Transverse colon (tissue), 4 donors: ENCODE measurements at regions of chr16 and their contacts with region 1.

Region 1: GRCh38 chr16:82681592-82681991 is 54.8 kb downstream of the CDH13 start:
- DNase-seq: no peak
- H3K4me3 ChIP-seq: no peak overlapping the region
- H3K27ac ChIP-seq: no peak overlapping the region
- H3K4me1 ChIP-seq: no peaks in the 10 kb centered on the region
- H3K27me3 ChIP-seq: no peaks in the 10 kb centered on the region
- CTCF ChIP-seq: no peak
- EP300 ChIP-seq: no peak
- POLR2A ChIP-seq: no peak

Region 2: GRCh38 chr16:82544378-82545160 is 137.0 kb before region 1 on chr16:
- in situ Hi-C with region 1: no loop called
- intact Hi-C with region 1: no loop called
- DNase-seq: no peak
- H3K4me3 ChIP-seq: no peak overlapping the region
- H3K27ac ChIP-seq: no peak overlapping the region
- H3K4me1 ChIP-seq: no peaks in the 10 kb centered on the region
- H3K27me3 ChIP-seq: no peaks in the 10 kb centered on the region
- CTCF ChIP-seq: no peak
- EP300 ChIP-seq: no peak
- POLR2A ChIP-seq: no peak

Region 3: DNA sequence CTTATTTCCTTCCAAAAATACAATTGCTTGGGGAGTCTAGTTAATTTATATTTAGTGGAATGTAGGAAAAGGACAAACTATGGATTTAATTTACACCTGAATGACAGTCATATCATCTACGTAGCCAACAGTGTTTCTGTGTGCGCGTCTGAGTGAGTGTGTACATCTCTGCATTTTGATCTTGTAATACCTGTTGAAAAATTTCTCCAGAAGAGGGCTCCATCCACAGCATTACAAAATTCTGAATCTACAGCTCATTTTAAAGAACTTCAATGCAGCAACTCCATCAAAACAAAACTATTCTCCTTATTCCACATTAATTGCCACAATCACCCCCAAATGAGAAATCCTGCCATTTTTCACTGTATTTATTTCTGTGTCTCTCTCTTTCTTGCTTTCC is 50.9 kb before region 1 on chr16:
- in situ Hi-C with region 1: no loop called
- intact Hi-C with region 1: no loop called
- DNase-seq: no peak
- H3K4me3 ChIP-seq: no peak overlapping the region
- H3K27ac ChIP-seq: no peak overlapping the region
- H3K4me1 ChIP-seq: peaks cover 18 to 38% (median 21%) of the 10 kb centered on the region in 4 donors
- H3K27me3 ChIP-seq: peaks cover 48% of the 10 kb centered on the region
- CTCF ChIP-seq: peak; percentile 25 to 36 (median 28)
- EP300 ChIP-seq: no peak
- POLR2A ChIP-seq: no peak

Region 4: DNA sequence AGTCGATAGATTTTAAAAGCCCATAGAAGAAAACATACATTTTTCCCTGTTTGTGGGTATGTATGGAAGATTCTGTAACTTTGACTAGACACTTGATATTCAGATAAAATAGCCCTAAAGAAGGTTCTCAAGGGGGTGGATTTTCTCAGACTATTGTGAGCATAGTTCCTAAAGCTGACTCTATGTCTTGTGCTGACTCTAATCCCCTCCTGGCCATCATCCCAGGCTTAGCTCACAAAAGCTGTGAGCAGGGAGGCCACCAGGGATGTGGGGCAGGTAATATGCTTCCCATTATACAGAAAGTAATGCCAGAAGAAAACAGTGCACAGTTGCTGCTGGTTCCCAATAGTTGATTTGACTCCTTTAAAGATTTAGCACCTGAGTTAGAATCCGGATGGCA is 22.8 kb before region 1 on chr16:
- in situ Hi-C with region 1: no loop called
- intact Hi-C with region 1: loop called (anchors 1 kb)
- DNase-seq: no peak
- H3K4me3 ChIP-seq: no peak overlapping the region
- H3K27ac ChIP-seq: no peak overlapping the region
- H3K4me1 ChIP-seq: peaks cover 0 to 3% (median under 1%) of the 10 kb centered on the region in 4 donors
- H3K27me3 ChIP-seq: no peaks in the 10 kb centered on the region
- CTCF ChIP-seq: no peak
- EP300 ChIP-seq: no peak
- POLR2A ChIP-seq: no peak

Region 5: GRCh38 chr16:82936941-82937551 is 255.5 kb after region 1 on chr16:
- in situ Hi-C with region 1: no loop called
- intact Hi-C with region 1: no loop called
- DNase-seq: no peak
- H3K4me3 ChIP-seq: no peak overlapping the region
- H3K27ac ChIP-seq: no peak overlapping the region
- H3K4me1 ChIP-seq: no peaks in the 10 kb centered on the region
- H3K27me3 ChIP-seq: no peaks in the 10 kb centered on the region
- CTCF ChIP-seq: no peak
- EP300 ChIP-seq: no peak
- POLR2A ChIP-seq: no peak